ENCODE measurements at regions of chr14 and their contacts with region 1.

Region 1: GRCh38 chr14:94001501-94002396 is 4.6 kb downstream of the CCDC197 start:
- DNase-seq: peak; percentile 73 to 83
- ATAC-seq: peak; percentile 81 to 94
- H3K4me3 ChIP-seq: no peak overlapping the region
- H3K27ac ChIP-seq: no peak overlapping the region; a peak in 1 of 6 replicates
- H3K4me1 ChIP-seq: no peaks in the 10 kb centered on the region
- CTCF ChIP-seq: peak; percentile 91
- EP300 ChIP-seq: no peak
- POLR2A ChIP-seq: no peak
- RAD21 ChIP-seq: peak; percentile 79 to 88

Region 2: GRCh38 chr14:93778453-93778852 is 223.3 kb before region 1 on chr14:
- CTCF ChIA-PET with region 1: no interaction called
- POLR2A ChIA-PET with region 1: no interaction called
- DNase-seq: no peak
- ATAC-seq: no peak
- H3K4me3 ChIP-seq: no peak overlapping the region
- H3K27ac ChIP-seq: no peak overlapping the region
- H3K4me1 ChIP-seq: no peaks in the 10 kb centered on the region
- CTCF ChIP-seq: no peak
- EP300 ChIP-seq: no peak
- POLR2A ChIP-seq: no peak
- RAD21 ChIP-seq: no peak

Region 3: GRCh38 chr14:93788543-93789227 is 213.1 kb before region 1 on chr14:
- CTCF ChIA-PET with region 1: no interaction called
- POLR2A ChIA-PET with region 1: no interaction called
- DNase-seq: peak; percentile 41 to 74
- ATAC-seq: peak; percentile 79 to 88
- H3K4me3 ChIP-seq: peak overlapping the region; percentile 61
- H3K27ac ChIP-seq: peak overlapping the region; percentile 58 to 85; a peak in 5 of 6 replicates
- H3K4me1 ChIP-seq: 0 out of 3 replicates have a peak, but pooled peaks cover 3% of the 10 kb centered on the region
- CTCF ChIP-seq: peak; percentile 32; the same call in 2 of the 3 replicates
- EP300 ChIP-seq: no peak
- POLR2A ChIP-seq: peak; percentile 26; the same call in 1 of the 2 replicates
- RAD21 ChIP-seq: peak; percentile 55 to 58

Region 4: DNA sequence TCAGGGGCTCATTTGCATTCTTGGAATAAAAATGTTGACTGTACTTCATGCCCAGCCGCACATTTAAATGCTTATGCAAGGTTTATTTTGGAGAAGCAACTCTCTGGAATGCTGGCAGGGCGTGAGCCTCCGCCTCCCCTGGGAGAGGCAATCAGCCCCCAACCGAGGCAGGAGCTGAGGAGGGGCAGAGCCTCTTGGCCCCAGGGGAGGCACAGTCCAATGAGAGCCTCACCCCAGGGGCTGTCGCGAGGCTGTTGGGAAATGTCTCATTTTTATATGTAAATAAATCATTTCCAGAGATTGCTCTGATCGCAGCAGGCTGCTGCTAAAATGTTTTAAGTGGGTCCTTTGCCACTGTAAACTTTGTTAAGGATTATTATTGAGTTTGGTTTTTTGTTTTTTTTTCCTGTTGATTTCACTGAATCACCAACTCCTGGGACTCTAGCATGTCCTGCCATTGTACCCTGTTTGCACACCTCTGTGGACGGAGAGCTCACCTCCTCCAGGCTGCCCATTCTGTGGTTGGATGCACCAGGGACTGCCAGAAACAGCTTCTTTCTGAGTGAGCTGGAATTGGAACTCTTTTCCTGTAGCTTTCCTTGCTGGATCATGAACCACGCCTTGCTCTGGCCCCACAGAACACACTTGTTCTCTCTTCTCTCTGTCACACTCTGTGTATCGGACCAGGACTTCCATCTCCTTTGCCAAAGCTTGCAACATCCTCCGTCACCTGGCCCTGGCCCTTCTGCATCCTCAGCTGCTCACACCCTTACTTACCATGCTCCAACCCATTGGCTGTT is 121.5 kb before region 1 on chr14:
- CTCF ChIA-PET with region 1: no interaction called
- POLR2A ChIA-PET with region 1: no interaction called
- DNase-seq: no peak
- ATAC-seq: no peak
- H3K4me3 ChIP-seq: no peak overlapping the region
- H3K27ac ChIP-seq: no peak overlapping the region
- H3K4me1 ChIP-seq: no peaks in the 10 kb centered on the region
- CTCF ChIP-seq: no peak
- EP300 ChIP-seq: no peak
- POLR2A ChIP-seq: no peak
- RAD21 ChIP-seq: no peak

Region 5: DNA sequence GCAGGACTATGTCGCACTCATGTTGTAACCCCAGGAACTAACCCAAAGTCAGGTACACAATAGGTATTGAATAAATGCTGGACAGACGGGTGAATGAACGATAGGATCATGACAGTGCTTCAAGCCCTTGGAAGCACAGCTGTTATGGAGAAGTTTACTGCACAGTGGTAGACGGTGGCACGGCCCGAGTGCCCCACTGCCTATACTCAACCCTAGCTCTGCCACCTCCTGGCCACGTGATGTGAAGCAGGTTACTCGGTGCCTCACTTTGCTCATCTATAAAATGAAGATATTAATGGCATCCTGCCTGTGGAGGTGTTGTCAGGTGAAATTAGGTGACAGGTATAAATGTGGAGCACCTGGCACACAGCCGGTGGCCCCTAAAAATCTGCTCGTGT is 31.2 kb before region 1 on chr14:
- CTCF ChIA-PET with region 1: interaction called, 30 read pairs
- POLR2A ChIA-PET with region 1: no interaction called
- DNase-seq: peak; percentile 31 to 37
- ATAC-seq: peak; percentile 68 to 89
- H3K4me3 ChIP-seq: no peak overlapping the region
- H3K27ac ChIP-seq: no peak overlapping the region
- H3K4me1 ChIP-seq: peaks cover 8% of the 10 kb centered on the region; the same call in 2 of the 3 replicates
- CTCF ChIP-seq: peak; percentile 46
- EP300 ChIP-seq: no peak
- POLR2A ChIP-seq: no peak
- RAD21 ChIP-seq: peak; percentile 52 to 66

Region 6: DNA sequence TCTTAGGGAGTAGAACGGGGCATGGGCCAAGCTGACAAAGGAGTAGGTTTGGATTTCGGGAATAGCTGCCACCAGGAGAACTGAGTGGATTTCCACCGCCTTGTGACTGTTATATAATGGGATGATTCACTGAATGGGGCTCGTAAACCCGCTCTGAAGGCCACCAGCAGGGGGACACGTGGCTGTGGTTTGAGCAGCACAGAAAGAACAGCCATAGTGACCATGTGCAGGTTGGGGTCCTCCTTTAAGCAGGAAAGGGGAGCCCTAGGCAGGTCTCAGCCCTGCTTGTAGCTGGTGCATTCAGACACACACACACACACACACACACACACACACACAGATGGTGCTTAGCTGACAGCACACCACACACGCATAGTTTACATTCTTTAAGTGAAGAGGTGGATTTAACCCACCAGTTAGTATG is 16.8 kb before region 1 on chr14:
- CTCF ChIA-PET with region 1: interaction called, 83 read pairs
- POLR2A ChIA-PET with region 1: no interaction called
- DNase-seq: peak; percentile 56 to 76
- ATAC-seq: peak; percentile 75 to 87; a peak in 5 of 6 replicates
- H3K4me3 ChIP-seq: no peak overlapping the region
- H3K27ac ChIP-seq: 0 out of 6 replicates have a peak overlapping the region, but pooled peaks of 1 of the 2 experiments have one; percentile 20
- H3K4me1 ChIP-seq: peaks cover 15% of the 10 kb centered on the region
- CTCF ChIP-seq: peak; percentile 24
- EP300 ChIP-seq: no peak
- POLR2A ChIP-seq: no peak
- RAD21 ChIP-seq: peak; percentile 21 to 34; a peak in 1 of 5 replicates

Region 7: GRCh38 chr14:94021001-94021400 is 19.3 kb after region 1 on chr14:
- CTCF ChIA-PET with region 1: interaction called, 47 read pairs
- POLR2A ChIA-PET with region 1: no interaction called
- DNase-seq: peak in 1 of 2 experiments; percentile 22
- ATAC-seq: peak; percentile 21 to 37; a peak in 2 of 6 replicates
- H3K4me3 ChIP-seq: no peak overlapping the region
- H3K27ac ChIP-seq: no peak overlapping the region
- H3K4me1 ChIP-seq: no peaks in the 10 kb centered on the region
- CTCF ChIP-seq: no peak
- EP300 ChIP-seq: no peak
- POLR2A ChIP-seq: no peak
- RAD21 ChIP-seq: no peak